ENCODE measurements at regions of chr3 and their contacts with region 1.

Region 1: DNA sequence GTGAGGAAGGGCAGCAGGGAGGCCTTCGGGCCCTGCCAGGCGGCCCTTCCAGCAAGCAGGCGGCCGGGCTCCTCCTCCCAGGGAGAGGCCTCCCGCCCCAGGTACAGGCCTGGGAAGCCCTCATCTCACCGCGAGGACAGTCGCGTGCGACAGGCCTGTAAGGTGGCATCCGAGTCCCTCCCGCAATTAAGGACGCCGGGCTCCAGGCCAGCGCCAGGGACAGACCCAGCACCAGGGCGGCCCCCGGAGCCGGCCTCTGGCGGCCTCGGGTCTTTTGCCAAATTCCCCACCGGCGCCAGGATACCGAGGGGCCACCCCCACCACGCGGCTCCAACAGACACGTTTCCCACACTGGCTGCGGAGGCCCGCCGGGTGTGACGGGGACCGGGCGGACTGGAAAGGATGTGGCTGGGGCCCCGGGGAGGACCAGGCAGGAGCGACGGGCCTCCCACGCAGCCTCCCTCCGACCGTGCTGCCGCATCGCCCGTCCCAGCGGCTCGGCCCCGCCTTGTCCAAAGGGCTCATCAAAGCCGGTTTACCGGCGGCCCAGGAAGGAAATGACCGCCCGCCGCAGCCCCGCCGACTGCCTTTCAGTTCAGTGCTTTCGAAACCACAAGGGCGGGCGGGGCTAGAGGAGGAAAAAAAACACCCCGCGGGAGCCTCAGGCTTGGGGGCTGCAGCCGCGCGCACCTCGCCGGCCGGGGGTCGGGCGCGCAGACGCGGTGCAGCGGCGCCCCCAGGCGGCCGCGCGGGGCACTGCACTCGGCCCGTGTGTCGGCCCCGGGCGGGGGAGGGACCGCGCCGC is 11.3 kb downstream of the XXYLT1 start:
- DNase-seq: peak; percentile 96
- ATAC-seq: peak; percentile 91
- H3K4me3 Mint-ChIP-seq: peak overlapping the region; percentile 57
- H3K27ac Mint-ChIP-seq: peak overlapping the region; percentile 83
- H3K4me1 Mint-ChIP-seq: peaks cover 31% of the 10 kb centered on the region
- H3K27me3 Mint-ChIP-seq: no peaks in the 10 kb centered on the region
- CTCF ChIP-seq: peak; percentile 76

Region 2: DNA sequence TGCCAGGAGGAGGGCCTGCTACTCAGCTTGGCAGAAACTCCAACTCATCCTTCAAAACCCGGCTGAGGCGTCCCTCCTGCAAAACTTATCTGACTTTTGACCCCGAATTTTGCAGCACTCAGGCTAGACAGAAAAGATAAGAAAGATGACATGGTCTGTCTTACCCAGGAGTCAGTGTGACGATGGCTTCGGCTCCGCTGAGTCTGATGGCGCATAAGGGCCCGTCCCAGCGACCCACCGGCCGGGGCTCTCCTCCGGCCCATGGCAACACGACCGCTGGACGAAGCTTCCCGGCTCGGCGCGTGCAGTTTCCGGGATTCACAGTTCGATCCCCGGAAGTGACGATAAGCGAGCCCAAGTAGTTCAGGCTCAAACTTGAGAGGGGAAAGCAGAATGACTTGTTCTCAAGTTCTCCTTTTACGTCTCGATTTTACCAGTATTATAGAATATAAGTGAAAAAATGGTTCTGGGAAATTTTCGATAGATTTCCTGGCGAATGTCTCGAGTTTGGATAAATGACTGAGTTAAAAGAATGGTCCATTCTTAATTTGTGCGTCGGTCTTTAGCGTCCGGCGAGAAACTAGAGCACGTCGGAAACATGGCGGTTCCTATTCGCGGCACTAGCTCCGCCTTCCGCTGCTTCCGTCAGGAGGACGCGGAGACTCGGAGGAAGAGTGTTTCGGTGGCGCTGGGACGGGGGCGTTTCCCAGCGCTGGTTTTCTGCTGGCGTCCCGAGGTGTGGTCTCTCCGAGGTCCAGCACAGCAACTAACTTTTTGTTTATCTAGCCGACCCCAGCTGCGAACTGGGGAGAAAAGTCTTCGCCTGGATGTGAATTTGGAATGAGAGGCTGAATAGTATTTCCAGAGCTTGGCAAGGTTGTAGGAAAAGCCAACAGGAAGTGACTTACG is 587.5 kb before region 1 on chr3 and contains the start of gene LSG1:
- CTCF ChIA-PET with region 1: interaction called, 11 read pairs
- POLR2A ChIA-PET with region 1: interaction called, 3 read pairs
- intact Hi-C with region 1: no loop called
- DNase-seq: peak; percentile 94
- ATAC-seq: peak; percentile 88
- H3K4me3 Mint-ChIP-seq: peak within 1 kb of the TSS; percentile 94
- H3K27ac Mint-ChIP-seq: peak within 1 kb of the TSS; percentile 98
- H3K4me1 Mint-ChIP-seq: peaks cover 59% of the 10 kb centered on the region
- H3K27me3 Mint-ChIP-seq: peaks cover 2% of the 10 kb centered on the region
- CTCF ChIP-seq: no peak
- total RNA-seq, gene LSG1: 36.5 to 41.3 TPM

Region 3: GRCh38 chr3:194682694-194683310 is 576.9 kb before region 1 on chr3:
- CTCF ChIA-PET with region 1: interaction called, 30 read pairs
- POLR2A ChIA-PET with region 1: interaction called, 8 read pairs
- intact Hi-C with region 1: loop called (anchors 2 kb)
- DNase-seq: peak; percentile 84
- ATAC-seq: peak; percentile 68
- H3K4me3 Mint-ChIP-seq: no peak overlapping the region
- H3K27ac Mint-ChIP-seq: no peak overlapping the region
- H3K4me1 Mint-ChIP-seq: peaks cover 34% of the 10 kb centered on the region
- H3K27me3 Mint-ChIP-seq: peaks cover 16% of the 10 kb centered on the region
- CTCF ChIP-seq: peak; percentile 85

Region 4: GRCh38 chr3:195012100-195012499 is 247.6 kb before region 1 on chr3:
- CTCF ChIA-PET with region 1: no interaction called
- POLR2A ChIA-PET with region 1: no interaction called
- intact Hi-C with region 1: loop called (anchors 5 kb)
- DNase-seq: no peak
- ATAC-seq: no peak
- H3K4me3 Mint-ChIP-seq: no peak overlapping the region
- H3K27ac Mint-ChIP-seq: no peak overlapping the region
- H3K4me1 Mint-ChIP-seq: peaks cover 3% of the 10 kb centered on the region
- H3K27me3 Mint-ChIP-seq: peaks cover 1% of the 10 kb centered on the region
- CTCF ChIP-seq: no peak

Region 5: GRCh38 chr3:195129644-195130492 is 129.8 kb before region 1 on chr3:
- CTCF ChIA-PET with region 1: no interaction called
- POLR2A ChIA-PET with region 1: no interaction called
- intact Hi-C with region 1: loop called (anchors 5 kb)
- DNase-seq: peak; percentile 80
- ATAC-seq: peak; percentile 83
- H3K4me3 Mint-ChIP-seq: peak overlapping the region; percentile 32
- H3K27ac Mint-ChIP-seq: peak overlapping the region; percentile 87
- H3K4me1 Mint-ChIP-seq: peaks cover 34% of the 10 kb centered on the region
- H3K27me3 Mint-ChIP-seq: no peaks in the 10 kb centered on the region
- CTCF ChIP-seq: no peak

Region 6: GRCh38 chr3:195522254-195523023 is 262.8 kb after region 1 on chr3:
- CTCF ChIA-PET with region 1: interaction called, 12 read pairs
- POLR2A ChIA-PET with region 1: no interaction called
- intact Hi-C with region 1: no loop called
- DNase-seq: no peak
- ATAC-seq: no peak
- H3K4me3 Mint-ChIP-seq: no peak overlapping the region
- H3K27ac Mint-ChIP-seq: peak overlapping the region; percentile 40
- H3K4me1 Mint-ChIP-seq: peaks cover 39% of the 10 kb centered on the region
- H3K27me3 Mint-ChIP-seq: no peaks in the 10 kb centered on the region
- CTCF ChIP-seq: peak; percentile 93

Measured in activated CD8-positive, alpha-beta T cell treated with anti-CD3 and anti-CD28 coated beads for 36 hours (primary cell).